ENCODE measurements at regions of chr1 and their contacts with region 1.

Region 1: DNA sequence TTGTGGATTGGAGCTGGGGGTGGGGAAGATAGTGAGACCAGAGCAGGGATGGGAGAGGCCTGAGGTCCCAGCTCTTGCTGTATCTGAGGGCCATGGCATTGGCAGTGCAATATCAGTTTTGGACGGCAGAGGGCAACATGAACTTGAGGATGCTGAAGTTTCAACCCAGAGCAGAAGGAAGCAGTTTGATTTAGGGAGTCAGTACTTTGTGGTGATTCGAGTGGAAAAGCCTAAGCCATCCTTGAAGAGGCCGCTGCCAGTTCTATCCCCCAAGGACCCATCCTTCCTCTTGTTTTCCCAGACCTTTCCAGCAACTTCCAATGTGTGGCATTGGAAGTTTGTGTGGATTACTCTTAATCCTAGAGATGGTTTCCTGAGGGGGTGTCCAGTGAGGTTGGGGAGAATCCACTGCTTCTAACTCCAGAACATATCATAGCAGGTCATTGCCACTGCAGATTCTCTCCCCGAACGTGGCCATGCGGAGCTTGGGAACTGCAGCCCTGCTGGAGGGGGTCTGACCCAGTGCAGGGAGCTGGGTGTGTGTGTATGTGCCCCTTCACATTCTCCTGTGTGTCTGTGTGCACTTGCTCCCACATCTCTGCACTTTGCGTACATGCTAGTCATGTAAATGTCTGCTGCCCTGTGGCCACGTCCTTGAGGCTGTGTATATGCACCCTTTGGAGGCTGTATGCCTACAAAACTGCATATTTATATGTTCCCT is 24.1 kb downstream of the SLC26A9 start:
- DNase-seq: peak; percentile 78
- ATAC-seq: peak; percentile 81
- H3K4me3 Mint-ChIP-seq: no peak overlapping the region
- H3K27ac Mint-ChIP-seq: no peak overlapping the region
- H3K4me1 Mint-ChIP-seq: peaks cover 6% of the 10 kb centered on the region
- H3K27me3 Mint-ChIP-seq: peaks cover 3% of the 10 kb centered on the region

Region 2: GRCh38 chr1:205896320-205896719 is 22.9 kb before region 1 on chr1:
- CTCF ChIA-PET with region 1: interaction called, 10 read pairs
- DNase-seq: no peak
- ATAC-seq: no peak
- H3K4me3 Mint-ChIP-seq: no peak overlapping the region
- H3K27ac Mint-ChIP-seq: no peak overlapping the region
- H3K4me1 Mint-ChIP-seq: peaks cover 2% of the 10 kb centered on the region
- H3K27me3 Mint-ChIP-seq: peaks cover 28% of the 10 kb centered on the region

Region 3: GRCh38 chr1:205950280-205950679 is 31.1 kb after region 1 on chr1:
- CTCF ChIA-PET with region 1: interaction called, 11 read pairs
- DNase-seq: no peak
- ATAC-seq: no peak
- H3K4me3 Mint-ChIP-seq: no peak overlapping the region
- H3K27ac Mint-ChIP-seq: no peak overlapping the region
- H3K4me1 Mint-ChIP-seq: no peaks in the 10 kb centered on the region
- H3K27me3 Mint-ChIP-seq: peaks cover 26% of the 10 kb centered on the region

Region 4: GRCh38 chr1:206106328-206107167 is 187.4 kb after region 1 on chr1:
- CTCF ChIA-PET with region 1: interaction called, 29 read pairs
- DNase-seq: peak; percentile 81
- ATAC-seq: peak; percentile 92
- H3K4me3 Mint-ChIP-seq: no peak overlapping the region
- H3K27ac Mint-ChIP-seq: no peak overlapping the region
- H3K4me1 Mint-ChIP-seq: no peaks in the 10 kb centered on the region
- H3K27me3 Mint-ChIP-seq: peaks cover 17% of the 10 kb centered on the region

Measured in activated CD8-positive, alpha-beta memory T cell treated with anti-CD3 and anti-CD28 coated beads, Interleukin-2, amount 10 ng/mL, durations not matched to agents 7 days and 5 days (primary cell).